GM10248 (cell line): ENCODE measurements at regions of chr11 and their contacts with region 1.

Region 1: DNA sequence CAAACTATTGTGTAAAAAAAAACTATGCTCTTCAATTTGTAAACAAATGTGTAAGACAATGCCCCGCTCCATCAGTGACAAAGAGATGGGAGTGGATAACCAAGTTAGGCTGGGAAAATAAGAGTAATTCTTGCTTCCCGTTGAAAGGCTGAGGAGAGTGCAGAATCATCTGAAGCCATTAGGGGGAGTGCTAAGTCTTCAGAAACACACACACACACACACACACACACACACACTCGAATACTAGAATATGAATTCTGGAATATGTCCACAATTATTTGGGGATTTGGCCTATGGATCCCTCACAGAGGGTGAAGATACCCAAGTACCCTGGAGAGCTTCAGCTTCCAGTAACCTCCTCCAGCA is 27.8 kb upstream of the ROBO3 start:
- DNase-seq: peak; percentile 44
- CTCF ChIP-seq: peak; percentile 69

Region 2: GRCh38 chr11:124800226-124800929 is 37.1 kb before region 1 on chr11 and contains the start of gene MSANTD2:
- CTCF ChIA-PET with region 1: interaction called, 15 read pairs
- POLR2A ChIA-PET with region 1: no interaction called
- DNase-seq: peak; percentile 90
- CTCF ChIP-seq: no peak

Region 3: GRCh38 chr11:124855437-124855836 is 18.0 kb after region 1 on chr11:
- CTCF ChIA-PET with region 1: interaction called, 12 read pairs
- POLR2A ChIA-PET with region 1: no interaction called
- DNase-seq: no peak
- CTCF ChIP-seq: no peak